ENCODE measurements at regions of chr4 and their contacts with region 1.

Region 1: GRCh38 chr4:81844717-81845116 is 373.0 kb upstream of the RASGEF1B start:
- DNase-seq: no peak
- H3K4me3 ChIP-seq: no peak overlapping the region
- H3K27ac ChIP-seq: no peak overlapping the region
- H3K4me1 ChIP-seq: no peaks in the 10 kb centered on the region
- H3K27me3 ChIP-seq: no peaks in the 10 kb centered on the region
- CTCF ChIP-seq: peak; percentile 31 to 70 (median 62)
- POLR2A ChIP-seq: no peak

Region 2: GRCh38 chr4:81469781-81470455 is 374.8 kb before region 1 on chr4:
- intact Hi-C with region 1: loop called (anchors 2 kb)
- DNase-seq: no peak
- H3K4me3 ChIP-seq: peak overlapping the region; percentile 57 to 89
- H3K27ac ChIP-seq: peak overlapping the region; percentile 89
- H3K4me1 ChIP-seq: peaks cover 29% of the 10 kb centered on the region
- H3K27me3 ChIP-seq: no peaks in the 10 kb centered on the region
- CTCF ChIP-seq: no peak
- POLR2A ChIP-seq: no peak

Region 3: DNA sequence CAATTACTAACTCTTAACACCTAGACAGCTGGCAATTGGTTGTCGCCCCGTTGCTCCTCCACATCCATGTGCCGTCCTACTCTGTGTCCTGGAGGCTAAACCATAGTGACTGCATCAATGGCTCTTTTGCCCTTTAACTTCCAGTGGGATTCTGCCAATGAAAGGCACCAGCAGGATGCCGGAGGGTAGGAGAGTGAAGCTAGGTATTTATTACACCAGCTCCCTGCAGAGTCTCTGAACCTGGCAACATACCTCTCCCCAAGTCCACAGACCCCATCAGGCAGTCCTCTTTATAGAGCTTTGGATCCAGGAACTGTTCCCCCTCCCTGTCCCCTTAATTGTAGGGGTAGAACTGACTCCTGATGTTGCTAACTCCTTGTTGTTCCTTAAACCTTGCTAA is 102.3 kb after region 1 on chr4:
- intact Hi-C with region 1: no loop called
- DNase-seq: no peak
- H3K4me3 ChIP-seq: no peak overlapping the region
- H3K27ac ChIP-seq: no peak overlapping the region
- H3K4me1 ChIP-seq: no peaks in the 10 kb centered on the region
- H3K27me3 ChIP-seq: no peaks in the 10 kb centered on the region
- CTCF ChIP-seq: no peak
- POLR2A ChIP-seq: no peak